B cell (primary cell): ENCODE measurements at regions of chr19 and their contacts with region 1.

Region 1: GRCh38 chr19:6110360-6110977 is at the start of gene RFX2:
- DNase-seq: peak; percentile 99
- ATAC-seq: peak; percentile 98
- H3K4me3 ChIP-seq: peak within 1 kb of the TSS; percentile 51 to 74 (median 54)
- H3K4me3 Mint-ChIP-seq: peak within 1 kb of the TSS; percentile 88
- H3K27ac ChIP-seq: peak within 1 kb of the TSS; percentile 30 to 38
- H3K27ac Mint-ChIP-seq: peak within 1 kb of the TSS; percentile 81
- H3K4me1 ChIP-seq: peaks cover 21 to 23% of the 10 kb centered on the region in 2 donors
- H3K4me1 Mint-ChIP-seq: peaks cover 21% of the 10 kb centered on the region
- H3K27me3 ChIP-seq: peaks cover 0 to 34% (median 12%) of the 10 kb centered on the region in 4 experiments
- H3K27me3 Mint-ChIP-seq: peaks cover 21% of the 10 kb centered on the region
- CTCF ChIP-seq: no peak
- total RNA-seq, gene RFX2: 6.5 and 8.6 TPM in 2 replicates

Region 2: DNA sequence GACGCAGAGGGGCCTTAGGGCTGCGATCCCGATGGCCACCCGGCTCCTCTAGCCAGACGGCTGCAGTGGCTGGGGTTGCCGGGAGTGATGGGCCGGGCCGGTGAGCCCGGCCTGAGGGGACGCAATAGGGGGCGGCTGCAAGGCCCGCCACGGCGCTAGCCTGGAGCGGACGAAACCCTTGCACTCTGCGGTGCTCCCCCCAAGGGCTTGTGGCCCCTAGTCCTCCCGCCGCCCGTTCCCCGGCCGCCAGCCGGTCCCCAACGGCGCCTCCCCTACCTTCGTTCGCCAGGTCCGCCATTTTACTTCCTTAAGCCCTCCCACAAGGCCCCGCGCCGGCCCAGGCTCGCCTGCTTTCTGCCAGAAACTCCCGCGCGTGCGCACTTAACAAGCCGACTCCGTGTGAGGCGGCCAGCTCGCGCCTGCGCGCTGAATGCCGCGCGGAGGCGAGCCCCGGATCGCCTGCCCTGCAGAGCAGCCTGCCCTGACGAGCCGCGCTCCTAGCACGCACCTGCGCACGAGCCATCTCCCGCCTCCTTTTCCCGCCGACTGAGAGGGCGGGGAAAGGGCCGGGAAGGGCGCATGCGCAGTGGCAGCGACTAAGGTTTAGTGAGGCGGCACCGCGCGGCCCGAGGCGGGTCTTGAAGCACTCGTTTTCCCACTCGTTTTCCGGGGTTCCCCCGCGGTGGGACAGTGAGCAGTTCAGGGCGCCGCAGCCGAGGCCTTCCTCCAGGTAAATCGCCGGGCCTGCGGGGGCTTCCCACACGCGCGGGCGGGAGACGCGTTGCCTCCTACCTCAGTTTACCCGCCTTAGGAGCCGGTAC is 132.5 kb before region 1 on chr19 and contains the start of gene RANBP3:
- CTCF ChIA-PET with region 1: no interaction called
- POLR2A ChIA-PET with region 1: no interaction called
- intact Hi-C with region 1: loop called (anchors 1 kb)
- DNase-seq: peak; percentile 99
- ATAC-seq: peak; percentile 91
- H3K4me3 ChIP-seq: peak within 1 kb of the TSS; percentile 59 to 93 (median 91)
- H3K4me3 Mint-ChIP-seq: peak within 1 kb of the TSS; percentile 97
- H3K27ac ChIP-seq: peak within 1 kb of the TSS; percentile 59 to 91
- H3K27ac Mint-ChIP-seq: peak within 1 kb of the TSS; percentile 99
- H3K4me1 ChIP-seq: peaks cover 38 to 47% of the 10 kb centered on the region in 2 donors
- H3K4me1 Mint-ChIP-seq: peaks cover 47% of the 10 kb centered on the region
- H3K27me3 ChIP-seq: no peaks in the 10 kb centered on the region
- H3K27me3 Mint-ChIP-seq: no peaks in the 10 kb centered on the region
- CTCF ChIP-seq: no peak
- total RNA-seq, gene RANBP3: 90.0 and 91.7 TPM in 2 replicates